ENCODE measurements at regions of chr6 and their contacts with region 1.

Region 1: GRCh38 chr6:34414999-34415858 is 10.6 kb downstream of the RPS10 start:
- DNase-seq: peak; percentile 50
- H3K4me3 ChIP-seq: no peak overlapping the region
- H3K27ac ChIP-seq: no peak overlapping the region
- H3K4me1 ChIP-seq: peaks cover 4% of the 10 kb centered on the region
- H3K27me3 ChIP-seq: no peaks in the 10 kb centered on the region
- CTCF ChIP-seq: peak; percentile 51 to 60

Region 2: GRCh38 chr6:34196126-34196830 is 219.0 kb before region 1 on chr6:
- CTCF ChIA-PET with region 1: interaction called, 26 read pairs
- dilution Hi-C with region 1: no loop called
- in situ Hi-C with region 1: loop called (anchors 10 kb)
- intact Hi-C with region 1: loop called (anchors 1 kb)
- DNase-seq: peak; percentile 45
- H3K4me3 ChIP-seq: peak overlapping the region; percentile 18 to 47 (median 40)
- H3K27ac ChIP-seq: no peak overlapping the region
- H3K4me1 ChIP-seq: peaks cover 11% of the 10 kb centered on the region
- H3K27me3 ChIP-seq: no peaks in the 10 kb centered on the region
- CTCF ChIP-seq: peak; percentile 71 to 98

Region 3: DNA sequence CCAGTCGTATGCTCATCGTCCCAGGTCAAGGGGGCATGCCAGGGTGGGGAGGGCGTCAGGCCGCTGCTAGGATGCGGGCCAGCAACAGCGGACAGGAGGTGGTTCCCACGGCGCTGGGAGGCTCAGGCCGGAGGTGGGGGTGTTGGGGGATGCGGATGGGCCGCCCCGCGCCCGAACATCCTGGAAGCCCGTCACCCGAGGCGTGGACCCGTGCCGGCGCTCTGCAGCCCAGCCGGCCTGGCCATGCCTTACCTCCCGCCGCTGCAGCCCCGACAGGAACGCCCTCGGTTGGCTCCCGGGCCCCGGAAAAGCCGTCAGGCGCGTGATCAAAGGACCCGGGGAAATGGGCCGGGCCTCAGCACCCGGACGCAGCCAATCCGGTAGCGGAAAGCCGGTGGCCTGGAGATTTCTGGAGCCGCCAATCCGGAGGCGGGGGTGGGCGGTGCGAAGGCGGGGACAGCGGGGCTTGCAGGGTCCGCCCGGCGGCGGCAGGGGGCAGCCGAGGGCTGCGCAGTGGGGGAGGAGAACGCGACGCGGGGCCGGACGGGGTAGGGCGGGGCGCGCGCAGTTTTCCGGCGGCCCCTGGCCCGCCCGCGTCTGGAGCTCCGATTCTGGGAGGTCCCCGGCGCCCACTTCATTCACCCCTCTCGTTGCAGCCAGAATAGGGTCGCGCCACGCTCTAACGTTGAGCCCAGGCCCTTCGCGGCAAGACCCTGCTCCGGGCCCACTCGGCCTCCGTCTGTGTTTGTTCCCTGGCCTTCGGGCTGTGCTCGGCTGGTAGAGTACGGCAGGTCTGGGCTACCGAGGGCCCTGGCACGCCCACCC is 166.3 kb before region 1 on chr6 and contains the start of gene SMIM29:
- CTCF ChIA-PET with region 1: interaction called, 23 read pairs
- dilution Hi-C with region 1: no loop called
- in situ Hi-C with region 1: no loop called
- intact Hi-C with region 1: loop called (anchors 1 kb)
- DNase-seq: peak; percentile 94
- H3K4me3 ChIP-seq: peak within 1 kb of the TSS; percentile 83 to 95 (median 84)
- H3K27ac ChIP-seq: peak within 1 kb of the TSS; percentile 48
- H3K4me1 ChIP-seq: peaks cover 47% of the 10 kb centered on the region
- H3K27me3 ChIP-seq: no peaks in the 10 kb centered on the region
- CTCF ChIP-seq: peak; percentile 38 to 87
- total RNA-seq, gene SMIM29: 20.3 to 40.6 TPM

Region 4: GRCh38 chr6:34278833-34279232 is 136.4 kb before region 1 on chr6:
- CTCF ChIA-PET with region 1: interaction called, 15 read pairs
- dilution Hi-C with region 1: no loop called
- in situ Hi-C with region 1: no loop called
- intact Hi-C with region 1: no loop called
- DNase-seq: no peak
- H3K4me3 ChIP-seq: no peak overlapping the region
- H3K27ac ChIP-seq: no peak overlapping the region
- H3K4me1 ChIP-seq: no peaks in the 10 kb centered on the region
- H3K27me3 ChIP-seq: no peaks in the 10 kb centered on the region
- CTCF ChIP-seq: no peak

Region 5: DNA sequence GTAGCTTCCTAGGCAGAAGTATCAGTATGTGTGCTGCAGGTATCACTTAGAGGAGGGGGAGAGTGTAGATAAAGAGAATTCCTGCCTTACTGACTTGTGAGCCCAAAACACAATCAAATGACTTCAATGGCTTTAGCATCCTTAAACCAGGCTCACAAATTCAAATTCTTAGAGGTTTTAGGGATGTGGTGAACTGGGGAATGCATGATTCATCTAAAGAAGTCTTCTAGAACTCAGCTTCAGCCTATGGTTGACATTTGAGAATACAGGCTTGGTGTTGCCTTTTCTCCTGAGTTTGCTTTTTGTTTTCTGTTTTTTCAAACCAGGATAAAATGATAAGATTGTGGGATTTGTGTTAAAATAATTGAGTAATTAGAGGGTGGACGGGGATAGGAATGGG is 356.5 kb after region 1 on chr6:
- CTCF ChIA-PET with region 1: no interaction called
- dilution Hi-C with region 1: no loop called
- in situ Hi-C with region 1: no loop called
- intact Hi-C with region 1: no loop called
- DNase-seq: peak; percentile 16
- H3K4me3 ChIP-seq: no peak overlapping the region
- H3K27ac ChIP-seq: no peak overlapping the region
- H3K4me1 ChIP-seq: no peaks in the 10 kb centered on the region
- H3K27me3 ChIP-seq: no peaks in the 10 kb centered on the region
- CTCF ChIP-seq: no peak

Measured in mammary epithelial cell (primary cell).